IMR-90 (cell line): ENCODE measurements at regions of chr14 and their contacts with region 1.

Region 1: DNA sequence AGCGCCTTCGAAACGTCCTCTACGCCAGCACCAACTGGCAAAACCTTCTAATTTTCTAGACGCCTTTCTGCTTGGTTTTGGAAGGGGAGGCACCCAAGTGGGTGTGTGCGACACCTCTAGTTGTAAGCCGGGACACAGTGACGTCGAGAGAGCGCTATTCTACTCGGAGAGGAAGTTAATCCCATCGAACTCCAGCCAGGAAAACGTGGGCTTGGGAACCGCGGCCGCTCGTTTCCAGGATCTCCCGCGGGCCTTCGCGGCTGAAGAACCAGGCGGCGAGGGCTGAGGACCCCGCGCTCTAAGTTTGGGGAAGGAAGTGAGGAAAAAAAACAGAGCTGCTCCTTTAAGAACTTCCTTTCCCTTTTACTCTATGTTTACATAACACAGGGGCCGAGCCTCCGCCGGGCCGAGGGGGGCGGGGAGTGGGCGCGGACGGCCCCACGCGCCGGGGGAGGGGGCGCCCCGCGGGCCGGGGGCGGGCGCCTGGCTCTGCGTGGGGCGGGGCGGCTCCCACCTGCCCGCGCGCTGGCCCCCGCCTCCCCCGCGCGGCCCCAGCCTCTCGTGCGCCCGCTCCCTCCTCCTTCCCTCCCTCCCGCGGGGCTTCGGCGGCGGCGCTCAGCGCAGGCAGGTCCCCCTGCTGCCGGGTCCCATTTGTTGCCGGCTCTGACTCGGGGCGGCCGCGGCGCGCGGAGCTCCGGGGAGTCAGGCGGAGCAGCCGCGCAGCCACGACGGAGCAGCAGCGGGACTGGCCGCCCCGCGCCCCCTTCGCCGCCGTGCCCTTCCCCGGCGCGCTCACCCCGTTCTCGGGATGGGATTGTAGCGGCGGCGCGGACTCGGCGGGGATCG is at the start of gene PELI2:
- DNase-seq: peak; percentile 73
- ATAC-seq: peak; percentile 82
- H3K4me3 ChIP-seq: peak within 1 kb of the TSS; percentile 59
- H3K27ac ChIP-seq: peak within 1 kb of the TSS; percentile 79
- H3K4me1 ChIP-seq: peaks cover 8% of the 10 kb centered on the region
- H3K27me3 ChIP-seq: no peaks in the 10 kb centered on the region
- CTCF ChIP-seq: peak; percentile 37; the same call in 1 of the 2 replicates
- POLR2A ChIP-seq: peak; percentile 93
- RAD21 ChIP-seq: peak; percentile 32
- total RNA-seq, gene PELI2: 31.7 and 36.7 TPM in 2 replicates

Region 2: DNA sequence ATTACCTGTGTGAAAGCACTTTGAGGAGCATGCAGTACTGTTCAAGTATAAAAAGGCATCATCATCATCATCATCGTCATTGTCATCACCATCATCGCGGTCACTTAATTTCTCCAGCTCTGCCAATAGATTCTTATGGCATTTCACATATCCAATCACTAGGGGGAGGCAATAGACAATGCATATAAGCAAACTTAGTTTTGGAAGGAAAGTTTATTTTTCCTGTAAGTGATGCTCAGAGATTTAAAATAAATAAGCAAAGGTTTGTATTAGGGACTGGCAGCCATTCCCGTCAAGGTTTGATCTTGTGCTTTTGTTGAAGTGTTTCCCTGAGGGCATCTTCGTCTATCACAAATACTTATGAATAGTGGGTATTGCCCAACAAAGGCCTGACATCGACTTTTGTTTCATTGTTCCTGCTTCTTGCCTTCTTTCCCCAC is 410.6 kb before region 1 on chr14:
- CTCF ChIA-PET with region 1: no interaction called
- POLR2A ChIA-PET with region 1: interaction called, 3 read pairs
- dilution Hi-C with region 1: no loop called
- in situ Hi-C with region 1: loop called (anchors 25 kb)
- intact Hi-C with region 1: loop called (anchors 1 kb)
- DNase-seq: peak; percentile 76
- ATAC-seq: peak; percentile 81
- H3K4me3 ChIP-seq: no peak overlapping the region
- H3K27ac ChIP-seq: no peak overlapping the region
- H3K4me1 ChIP-seq: peaks cover 4% of the 10 kb centered on the region
- H3K27me3 ChIP-seq: no peaks in the 10 kb centered on the region
- CTCF ChIP-seq: peak; percentile 82
- POLR2A ChIP-seq: no peak
- RAD21 ChIP-seq: peak; percentile 91

Region 3: GRCh38 chr14:55846826-55847446 is 271.1 kb before region 1 on chr14:
- CTCF ChIA-PET with region 1: no interaction called
- POLR2A ChIA-PET with region 1: no interaction called
- dilution Hi-C with region 1: no loop called
- in situ Hi-C with region 1: no loop called
- intact Hi-C with region 1: loop called (anchors 2 kb)
- DNase-seq: peak; percentile 50
- ATAC-seq: no peak
- H3K4me3 ChIP-seq: no peak overlapping the region
- H3K27ac ChIP-seq: no peak overlapping the region
- H3K4me1 ChIP-seq: peaks cover 18% of the 10 kb centered on the region
- H3K27me3 ChIP-seq: no peaks in the 10 kb centered on the region
- CTCF ChIP-seq: no peak
- POLR2A ChIP-seq: no peak
- RAD21 ChIP-seq: no peak

Region 4: DNA sequence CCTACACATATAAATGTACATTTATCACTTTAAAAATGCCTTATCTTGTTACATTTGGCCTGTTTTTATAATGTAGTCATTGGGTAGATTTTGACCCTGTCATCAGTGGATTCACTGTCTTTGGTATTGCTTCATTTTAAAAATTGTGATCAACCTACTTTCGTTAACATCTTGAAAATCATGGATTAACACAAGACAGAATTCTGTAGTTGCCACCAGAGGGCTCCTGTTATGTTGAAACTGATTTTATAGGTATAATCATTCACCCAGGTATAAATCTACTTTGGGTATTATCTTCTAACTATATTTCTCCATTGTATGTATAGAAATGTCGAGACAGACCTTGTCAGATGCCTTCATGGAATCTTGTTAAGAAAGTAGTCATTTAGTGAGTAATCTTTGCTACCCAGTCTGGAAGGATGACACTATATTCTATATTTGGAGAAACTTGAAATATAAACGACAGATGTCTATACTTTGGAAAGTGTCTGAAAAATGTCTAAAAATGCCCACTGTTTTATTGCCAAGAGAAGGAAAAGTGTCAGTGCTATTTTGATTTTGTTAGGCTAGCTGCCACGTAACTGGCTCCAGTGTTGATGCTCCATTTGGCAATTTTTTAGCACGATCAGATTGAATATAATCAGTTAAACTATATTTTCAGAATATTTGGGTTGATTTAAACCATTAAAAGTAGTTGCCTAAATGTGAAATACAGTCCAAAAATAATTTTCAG is 129.6 kb after region 1 on chr14:
- CTCF ChIA-PET with region 1: no interaction called
- POLR2A ChIA-PET with region 1: no interaction called
- dilution Hi-C with region 1: no loop called
- in situ Hi-C with region 1: no loop called
- intact Hi-C with region 1: loop called (anchors 1 kb)
- DNase-seq: peak; percentile 31
- ATAC-seq: no peak
- H3K4me3 ChIP-seq: no peak overlapping the region
- H3K27ac ChIP-seq: no peak overlapping the region
- H3K4me1 ChIP-seq: peaks cover 9% of the 10 kb centered on the region; the same call in 1 of the 2 replicates
- H3K27me3 ChIP-seq: no peaks in the 10 kb centered on the region
- CTCF ChIP-seq: peak; percentile 43
- POLR2A ChIP-seq: no peak
- RAD21 ChIP-seq: peak; percentile 38

Region 5: DNA sequence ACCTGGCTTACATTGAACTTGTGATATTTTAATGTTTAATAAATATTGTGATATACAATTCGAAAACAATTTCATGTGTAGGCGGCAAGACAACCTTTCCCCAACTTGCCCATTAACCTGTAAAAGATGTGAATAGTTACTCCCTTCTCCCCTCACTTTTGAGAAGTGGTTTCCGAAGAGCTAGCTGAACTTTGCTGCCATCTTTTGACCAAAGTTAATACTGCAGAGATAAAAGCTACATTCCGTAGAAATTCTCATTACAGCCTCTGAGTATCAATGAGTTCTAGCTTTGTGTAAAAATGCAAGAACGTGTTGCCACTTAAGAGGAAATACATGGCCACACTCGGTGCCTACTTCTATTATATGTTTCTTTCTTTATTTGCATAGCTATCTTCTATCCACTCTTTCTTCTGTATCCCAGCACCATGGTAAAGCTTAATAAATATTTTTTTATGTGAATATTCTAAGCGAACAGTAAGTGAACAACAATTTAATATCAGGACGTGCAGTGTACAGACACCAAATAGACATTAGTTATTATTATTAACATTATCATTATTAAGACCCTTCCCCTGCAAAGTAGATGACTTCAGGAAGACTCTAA is 356.5 kb after region 1 on chr14:
- CTCF ChIA-PET with region 1: no interaction called
- POLR2A ChIA-PET with region 1: no interaction called
- dilution Hi-C with region 1: no loop called
- in situ Hi-C with region 1: no loop called
- intact Hi-C with region 1: loop called (anchors 2 kb)
- DNase-seq: peak; percentile 41
- ATAC-seq: peak; percentile 81
- H3K4me3 ChIP-seq: no peak overlapping the region
- H3K27ac ChIP-seq: no peak overlapping the region
- H3K4me1 ChIP-seq: no peaks in the 10 kb centered on the region
- H3K27me3 ChIP-seq: peaks cover 24% of the 10 kb centered on the region
- CTCF ChIP-seq: peak; percentile 87
- POLR2A ChIP-seq: no peak
- RAD21 ChIP-seq: peak; percentile 97